ENCODE measurements at regions of chr17 and their contacts with region 1.

Region 1: GRCh38 chr17:78324391-78325075 is 35.3 kb downstream of the SOCS3 start:
- H3K4me3 Mint-ChIP-seq: peak overlapping the region; percentile 69
- H3K27ac Mint-ChIP-seq: peak overlapping the region; percentile 92
- H3K4me1 Mint-ChIP-seq: peaks cover 59% of the 10 kb centered on the region
- H3K27me3 Mint-ChIP-seq: no peaks in the 10 kb centered on the region

Region 2: DNA sequence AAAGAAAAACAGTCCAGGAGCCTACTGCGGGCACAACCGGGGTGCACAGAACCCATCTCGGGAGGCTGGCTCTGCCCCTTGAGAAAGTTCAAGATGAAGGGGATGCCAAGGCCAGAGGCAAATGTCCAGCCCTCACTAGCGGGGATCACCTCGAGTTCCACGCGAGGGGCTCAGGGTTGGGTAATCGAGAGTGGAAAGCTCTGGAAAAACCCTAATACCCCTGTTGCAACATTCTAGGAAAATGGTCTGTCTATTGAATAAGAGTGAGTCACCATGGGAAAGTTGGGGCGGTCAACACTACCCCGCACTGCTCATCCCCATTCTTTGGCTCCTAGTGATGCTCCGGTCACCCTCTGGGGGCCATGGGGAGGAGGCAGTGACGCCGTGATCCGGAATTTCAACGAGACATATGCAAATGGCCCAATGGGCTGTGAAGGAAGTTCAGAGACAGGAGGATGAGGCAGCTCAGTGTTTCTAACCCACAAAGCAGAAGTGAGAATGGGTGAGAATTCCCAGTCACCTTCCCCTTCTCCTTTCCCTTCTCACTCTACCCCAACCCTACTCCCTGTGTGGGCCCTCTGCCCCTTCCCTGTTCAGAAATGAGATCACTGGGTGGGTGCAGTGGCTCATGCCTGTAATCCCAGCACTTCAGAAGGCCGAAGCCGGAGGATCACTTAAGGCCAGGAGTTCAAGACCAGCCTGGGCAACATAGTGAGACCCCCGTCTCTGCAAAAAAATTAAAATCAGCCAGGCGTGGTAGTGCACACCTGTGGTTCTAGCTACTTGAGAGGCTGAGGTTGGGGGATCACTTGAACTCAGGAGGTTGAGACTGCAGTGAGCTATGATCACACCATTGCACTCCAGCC is 12.9 kb after region 1 on chr17:
- intact Hi-C with region 1: loop called (anchors 1 kb)
- H3K4me3 Mint-ChIP-seq: no peak overlapping the region
- H3K27ac Mint-ChIP-seq: peak overlapping the region; percentile 74
- H3K4me1 Mint-ChIP-seq: peaks cover 61% of the 10 kb centered on the region
- H3K27me3 Mint-ChIP-seq: peaks cover 5% of the 10 kb centered on the region

Region 3: GRCh38 chr17:78360371-78361224 is 36.1 kb after region 1 on chr17:
- intact Hi-C with region 1: loop called (anchors 2 kb)
- H3K4me3 Mint-ChIP-seq: peak overlapping the region; percentile 66
- H3K27ac Mint-ChIP-seq: peak overlapping the region; percentile 71
- H3K4me1 Mint-ChIP-seq: peaks cover 55% of the 10 kb centered on the region
- H3K27me3 Mint-ChIP-seq: peaks cover 26% of the 10 kb centered on the region